ENCODE measurements at regions of chr15 and their contacts with region 1.

Region 1: GRCh38 chr15:78131295-78132061 is at the start of gene CIB2:
- DNase-seq: peak; percentile 90 to 96 (median 91)
- H3K4me3 ChIP-seq: peak within 1 kb of the TSS; percentile 47 to 81 (median 80)
- H3K27ac ChIP-seq: peak within 1 kb of the TSS; percentile 20 to 71
- H3K4me1 ChIP-seq: peaks cover 0 to 5% (median 0%) of the 10 kb centered on the region in 3 donors
- H3K27me3 ChIP-seq: no peaks in the 10 kb centered on the region
- CTCF ChIP-seq: peak; percentile 69
- total RNA-seq, gene CIB2: 13.7 TPM

Region 2: GRCh38 chr15:78195735-78196201 is 64.3 kb after region 1 on chr15:
- intact Hi-C with region 1: loop called (anchors 10 kb)
- DNase-seq: peak in 4 of 5 donors; percentile 31 to 47 (median 42)
- H3K4me3 ChIP-seq: no peak overlapping the region
- H3K27ac ChIP-seq: no peak overlapping the region
- H3K4me1 ChIP-seq: no peaks in the 10 kb centered on the region
- H3K27me3 ChIP-seq: no peaks in the 10 kb centered on the region
- CTCF ChIP-seq: peak; percentile 69

Region 3: GRCh38 chr15:78234515-78235040 is 103.1 kb after region 1 on chr15 and contains the start of gene ACSBG1:
- intact Hi-C with region 1: loop called (anchors 10 kb)
- DNase-seq: no peak
- H3K4me3 ChIP-seq: no peak within 1 kb of the TSS
- H3K27ac ChIP-seq: no peak within 1 kb of the TSS
- H3K4me1 ChIP-seq: no peaks in the 10 kb centered on the region
- H3K27me3 ChIP-seq: no peaks in the 10 kb centered on the region
- CTCF ChIP-seq: no peak
- total RNA-seq, gene ACSBG1: 0.13 TPM